ENCODE measurements at regions of chr12 and their contacts with region 1.

Region 1: DNA sequence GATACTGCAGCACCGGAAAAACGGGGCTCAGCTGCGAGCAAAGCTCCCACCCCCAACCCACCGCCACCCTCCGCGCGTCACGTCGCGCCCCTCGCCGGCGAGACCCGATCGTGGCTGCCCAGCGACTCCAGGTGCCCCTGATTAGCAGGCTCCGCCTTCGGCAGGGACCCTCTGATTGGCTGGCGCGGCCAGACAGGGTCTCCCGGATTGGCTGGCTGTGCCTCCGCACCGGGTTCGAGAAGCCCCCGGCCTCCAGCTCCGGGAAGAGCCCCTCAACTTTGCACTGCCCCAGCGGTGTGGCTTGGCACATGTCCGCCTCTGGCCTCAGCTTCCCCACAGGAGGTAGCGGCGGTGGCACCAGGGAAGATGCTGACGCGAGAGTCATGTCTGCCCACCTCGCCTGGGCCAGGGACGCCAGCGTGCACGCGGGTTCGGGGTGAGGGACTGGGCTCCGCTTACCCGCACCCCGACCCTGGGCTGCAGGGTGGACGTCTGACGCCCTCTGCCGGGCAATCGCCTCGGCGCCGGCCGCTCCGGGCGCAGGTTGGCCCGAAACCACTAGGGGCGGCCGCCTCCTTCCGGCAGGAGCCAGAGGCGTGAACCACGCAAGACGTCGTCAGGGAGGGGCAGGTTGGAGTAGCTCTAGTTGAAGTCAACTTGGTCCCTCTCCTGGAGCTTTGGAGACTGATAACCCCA is 498 bp upstream of the RHOF start:
- DNase-seq: peak; percentile 95
- ATAC-seq: peak; percentile 60
- H3K4me3 Mint-ChIP-seq: peak overlapping the region; percentile 71
- H3K27ac Mint-ChIP-seq: peak overlapping the region; percentile 90
- H3K4me1 Mint-ChIP-seq: peaks cover 49% of the 10 kb centered on the region
- H3K27me3 Mint-ChIP-seq: no peaks in the 10 kb centered on the region; the same call in 1 of the 2 replicates
- CTCF ChIP-seq: peak; percentile 87

Region 2: DNA sequence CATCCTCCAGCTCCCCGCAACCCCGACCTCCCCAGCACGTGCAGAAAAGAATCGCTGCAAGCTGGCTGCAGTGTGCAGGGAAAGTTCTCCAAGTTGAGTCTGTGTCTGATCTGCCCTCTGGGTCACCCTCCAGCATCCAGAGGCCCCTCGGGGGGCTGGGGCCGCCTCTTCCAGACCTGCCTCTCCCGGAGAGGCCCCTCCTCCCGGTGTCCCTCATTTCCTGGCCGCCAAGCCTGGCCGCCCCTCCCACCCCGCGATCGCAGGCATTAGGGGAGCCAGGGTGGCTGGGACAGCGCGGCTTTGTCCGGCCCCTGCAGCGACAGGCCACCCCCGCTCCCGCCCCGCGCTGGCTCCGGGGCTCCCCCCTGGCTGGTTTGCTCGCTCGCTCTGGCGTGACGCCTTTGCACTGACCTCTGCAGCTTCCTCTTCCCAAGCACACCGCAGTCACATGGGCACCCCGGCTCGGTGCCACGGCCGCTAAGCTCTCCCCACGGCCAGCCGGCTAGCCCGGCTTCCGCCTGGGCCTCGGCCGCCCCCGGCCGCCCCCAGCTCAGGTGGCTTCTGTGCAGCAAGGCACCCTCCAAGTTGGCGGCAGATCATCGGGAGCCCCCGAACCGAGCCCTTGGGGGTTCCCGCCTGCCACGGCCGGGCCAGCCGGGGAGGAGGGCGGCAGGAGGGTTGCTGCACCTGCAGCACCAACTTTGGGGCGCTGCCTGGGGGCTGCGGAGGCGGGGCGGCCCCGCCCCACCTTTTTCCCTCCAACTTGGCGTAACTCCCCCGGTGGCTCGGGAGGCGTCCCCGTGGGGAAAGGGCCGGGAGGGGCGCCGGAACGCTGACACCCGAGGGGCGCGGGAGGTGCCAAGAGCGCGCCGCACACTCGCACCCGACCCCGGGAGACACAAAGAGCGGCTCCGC is 256.8 kb before region 1 on chr12:
- CTCF ChIA-PET with region 1: interaction called, 10 read pairs
- POLR2A ChIA-PET with region 1: no interaction called
- DNase-seq: peak; percentile 57
- ATAC-seq: peak; percentile 26
- H3K4me3 Mint-ChIP-seq: peak overlapping the region; percentile 65
- H3K27ac Mint-ChIP-seq: no peak overlapping the region
- H3K4me1 Mint-ChIP-seq: peaks cover 59% of the 10 kb centered on the region
- H3K27me3 Mint-ChIP-seq: peaks cover 9% of the 10 kb centered on the region
- CTCF ChIP-seq: no peak

Region 3: GRCh38 chr12:121697098-121697698 is 96.8 kb before region 1 on chr12:
- CTCF ChIA-PET with region 1: interaction called, 12 read pairs
- POLR2A ChIA-PET with region 1: no interaction called
- DNase-seq: no peak
- ATAC-seq: no peak
- H3K4me3 Mint-ChIP-seq: no peak overlapping the region
- H3K27ac Mint-ChIP-seq: no peak overlapping the region
- H3K4me1 Mint-ChIP-seq: no peaks in the 10 kb centered on the region
- H3K27me3 Mint-ChIP-seq: no peaks in the 10 kb centered on the region
- CTCF ChIP-seq: peak; percentile 25; the same call in 1 of the 2 replicates

Region 4: DNA sequence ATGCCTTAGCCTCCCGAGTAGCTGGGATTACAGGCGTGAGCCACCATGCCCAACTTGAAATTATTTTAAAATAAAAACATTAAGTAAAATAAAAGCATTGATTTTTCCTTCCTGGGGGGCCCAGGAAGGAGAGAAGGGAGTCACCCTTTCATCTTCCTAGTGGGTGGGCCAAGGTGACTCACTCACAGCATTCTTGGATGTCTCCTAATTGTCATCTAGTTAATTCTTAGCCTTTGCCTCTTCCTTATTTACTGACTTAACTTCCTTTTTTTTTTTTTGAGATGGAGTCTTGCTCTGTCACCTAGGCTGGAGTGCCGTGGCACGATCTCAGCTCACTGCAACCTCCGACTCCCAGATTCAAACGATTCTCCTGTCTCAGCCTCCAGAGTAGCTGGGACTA is 52.2 kb before region 1 on chr12:
- CTCF ChIA-PET with region 1: no interaction called
- POLR2A ChIA-PET with region 1: no interaction called
- DNase-seq: no peak
- ATAC-seq: no peak
- H3K4me3 Mint-ChIP-seq: no peak overlapping the region
- H3K27ac Mint-ChIP-seq: peak overlapping the region; percentile 95
- H3K4me1 Mint-ChIP-seq: peaks cover 2% of the 10 kb centered on the region; the same call in 1 of the 2 replicates
- H3K27me3 Mint-ChIP-seq: no peaks in the 10 kb centered on the region
- CTCF ChIP-seq: no peak

Region 5: GRCh38 chr12:121773011-121773777 is 20.8 kb before region 1 on chr12:
- CTCF ChIA-PET with region 1: interaction called, 227 read pairs
- POLR2A ChIA-PET with region 1: interaction called, 3 read pairs
- DNase-seq: peak; percentile 88
- ATAC-seq: peak; percentile 77
- H3K4me3 Mint-ChIP-seq: no peak overlapping the region
- H3K27ac Mint-ChIP-seq: peak overlapping the region; percentile 72
- H3K4me1 Mint-ChIP-seq: peaks cover 16% of the 10 kb centered on the region
- H3K27me3 Mint-ChIP-seq: no peaks in the 10 kb centered on the region
- CTCF ChIP-seq: peak; percentile 77

Region 6: GRCh38 chr12:121839106-121839992 is 45.4 kb after region 1 on chr12:
- CTCF ChIA-PET with region 1: interaction called, 73 read pairs
- POLR2A ChIA-PET with region 1: no interaction called
- DNase-seq: peak; percentile 100
- ATAC-seq: peak; percentile 97
- H3K4me3 Mint-ChIP-seq: peak overlapping the region; percentile 97
- H3K27ac Mint-ChIP-seq: peak overlapping the region; percentile 98
- H3K4me1 Mint-ChIP-seq: peaks cover 12% of the 10 kb centered on the region
- H3K27me3 Mint-ChIP-seq: peaks cover 16% of the 10 kb centered on the region
- CTCF ChIP-seq: no peak

Region 7: DNA sequence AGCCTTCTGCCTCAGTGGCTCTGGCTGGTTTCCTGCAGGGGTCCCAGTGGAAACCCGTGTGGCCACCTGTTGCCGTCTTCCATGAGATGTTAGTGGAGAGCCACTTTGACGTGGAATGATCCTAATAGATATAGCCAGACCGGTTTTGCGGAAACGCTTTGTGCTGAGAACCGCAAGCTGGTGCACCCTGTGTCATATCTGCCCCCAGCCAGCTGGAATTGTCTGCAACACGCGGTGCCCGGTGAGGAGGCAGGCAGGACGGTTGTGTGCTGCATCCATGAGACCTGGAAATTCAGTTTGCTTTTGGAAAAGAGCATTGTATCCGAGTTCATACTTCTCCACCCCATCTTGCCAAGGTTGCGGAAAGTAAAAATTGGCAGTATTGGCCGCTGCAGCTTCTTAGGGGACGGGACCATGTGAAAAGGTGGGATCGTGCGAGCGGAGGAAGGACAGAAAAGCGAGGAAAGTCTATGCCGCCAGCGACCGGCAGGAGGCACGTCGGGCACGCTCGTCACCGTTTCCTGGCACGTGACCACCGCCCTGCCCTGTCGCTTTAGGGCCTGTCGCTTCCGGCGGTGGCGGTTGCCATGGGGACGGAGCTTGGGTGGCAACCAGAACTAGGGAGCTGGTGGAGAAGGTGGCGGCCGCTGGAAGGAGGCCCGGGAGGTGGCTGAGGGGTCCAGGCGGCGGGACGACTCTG is 124.1 kb after region 1 on chr12 and contains the start of gene CFAP251:
- CTCF ChIA-PET with region 1: interaction called, 27 read pairs
- POLR2A ChIA-PET with region 1: no interaction called
- DNase-seq: peak; percentile 98
- ATAC-seq: peak; percentile 96
- H3K4me3 Mint-ChIP-seq: peak within 1 kb of the TSS; percentile 70
- H3K27ac Mint-ChIP-seq: peak within 1 kb of the TSS; percentile 88
- H3K4me1 Mint-ChIP-seq: peaks cover 10% of the 10 kb centered on the region
- H3K27me3 Mint-ChIP-seq: no peaks in the 10 kb centered on the region; the same call in 1 of the 2 replicates
- CTCF ChIP-seq: peak; percentile 61
- total RNA-seq, gene CFAP251: 2.9 to 3.1 TPM (median 3.0 TPM) in 3 replicates

Region 8: GRCh38 chr12:121992059-121992879 is 198.3 kb after region 1 on chr12:
- CTCF ChIA-PET with region 1: no interaction called
- POLR2A ChIA-PET with region 1: no interaction called
- DNase-seq: no peak
- ATAC-seq: no peak
- H3K4me3 Mint-ChIP-seq: no peak overlapping the region
- H3K27ac Mint-ChIP-seq: no peak overlapping the region
- H3K4me1 Mint-ChIP-seq: no peaks in the 10 kb centered on the region
- H3K27me3 Mint-ChIP-seq: no peaks in the 10 kb centered on the region
- CTCF ChIP-seq: no peak

Region 9: DNA sequence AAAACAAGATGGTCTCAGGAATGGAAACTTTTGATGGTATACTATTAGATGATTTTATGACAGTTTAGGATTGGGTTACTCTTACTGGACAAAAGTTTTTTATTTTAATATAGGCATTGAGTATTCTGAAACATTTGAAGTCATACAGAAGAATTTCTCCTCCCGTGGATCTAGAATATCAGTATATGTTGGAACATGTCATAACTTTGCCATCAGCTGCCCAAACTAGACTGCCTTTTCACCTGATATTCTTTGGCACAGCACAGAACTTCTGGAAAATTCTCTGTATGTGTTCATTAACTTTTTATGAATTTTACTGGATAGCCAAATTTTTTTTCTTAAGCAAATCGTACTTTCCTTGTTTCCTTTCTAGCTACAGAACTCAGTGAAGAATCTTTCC is 808.5 kb after region 1 on chr12:
- CTCF ChIA-PET with region 1: no interaction called
- POLR2A ChIA-PET with region 1: no interaction called
- DNase-seq: no peak
- ATAC-seq: no peak
- H3K4me3 Mint-ChIP-seq: no peak overlapping the region
- H3K27ac Mint-ChIP-seq: no peak overlapping the region
- H3K4me1 Mint-ChIP-seq: no peaks in the 10 kb centered on the region
- H3K27me3 Mint-ChIP-seq: no peaks in the 10 kb centered on the region
- CTCF ChIP-seq: no peak

Measured in WTC11 (cell line).